ENCODE measurements at regions of chr7 and their contacts with region 1.

Region 1: DNA sequence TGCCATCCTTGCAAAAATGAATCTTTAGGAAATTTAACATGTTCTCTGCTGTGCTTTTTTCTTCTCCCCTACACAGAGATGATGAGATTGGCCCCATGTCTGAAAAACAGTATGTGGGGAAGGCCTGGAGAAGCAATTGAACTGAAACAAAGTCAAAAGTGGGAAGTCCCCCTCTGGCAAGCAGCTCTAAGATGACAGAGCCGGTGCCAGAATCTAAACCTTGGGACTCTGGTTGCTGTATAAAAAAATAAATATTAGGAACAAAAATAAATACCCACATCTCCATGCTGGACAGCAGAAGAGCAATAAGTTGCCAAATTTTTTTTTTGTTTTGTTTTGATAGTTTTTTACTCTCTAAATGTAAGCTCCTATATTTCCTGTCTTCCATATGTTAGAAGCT is 51.8 kb upstream of the TRIL start:
- DNase-seq: no peak
- H3K4me3 ChIP-seq: no peak overlapping the region
- CTCF ChIP-seq: no peak
- POLR2A ChIP-seq: no peak

Region 2: DNA sequence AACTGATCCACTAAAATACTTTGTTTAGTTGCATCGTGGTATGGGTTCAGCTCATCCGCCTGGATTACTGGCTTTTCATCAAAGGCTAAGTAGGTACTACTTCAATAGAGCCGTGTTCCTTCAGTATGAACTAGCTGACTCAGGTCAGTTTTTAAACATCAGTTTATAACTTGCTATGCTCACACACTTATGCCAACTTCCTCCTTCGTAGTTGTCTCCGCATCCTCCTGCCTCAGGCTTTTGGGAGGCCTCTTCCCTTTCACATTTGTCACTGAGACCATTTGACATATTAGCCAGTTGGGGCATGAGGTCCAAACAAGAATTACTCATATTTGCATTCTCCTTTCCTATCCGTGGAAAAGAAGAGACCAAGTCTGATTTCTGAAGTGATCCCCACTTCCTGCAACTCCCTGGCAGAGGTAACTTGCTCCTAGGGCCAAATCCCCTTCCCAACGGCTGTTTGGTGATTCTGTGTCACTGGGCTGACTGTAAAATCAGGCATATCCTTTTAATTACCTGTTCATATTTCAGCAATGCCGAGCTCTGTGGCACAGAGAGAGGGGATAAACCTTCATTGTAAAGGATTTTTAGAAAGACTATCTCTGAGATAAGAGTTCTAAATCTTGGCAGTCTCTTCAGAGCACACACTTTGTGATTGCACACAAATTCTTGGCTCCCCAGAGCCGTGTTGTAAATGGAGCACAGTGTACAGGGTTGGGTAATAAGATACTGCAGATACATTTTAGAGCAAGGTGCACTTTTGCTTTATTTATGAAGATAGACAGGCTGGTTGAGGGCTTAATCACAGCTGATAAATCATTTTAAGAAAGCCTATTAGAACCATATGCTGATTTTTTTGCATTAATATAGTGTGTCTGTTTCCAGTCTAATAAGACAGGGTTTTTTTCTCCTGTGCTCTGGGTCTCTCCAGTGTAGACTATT is 489.6 kb before region 1 on chr7:
- intact Hi-C with region 1: no loop called
- DNase-seq: no peak
- H3K4me3 ChIP-seq: no peak overlapping the region
- CTCF ChIP-seq: no peak
- POLR2A ChIP-seq: no peak

Region 3: DNA sequence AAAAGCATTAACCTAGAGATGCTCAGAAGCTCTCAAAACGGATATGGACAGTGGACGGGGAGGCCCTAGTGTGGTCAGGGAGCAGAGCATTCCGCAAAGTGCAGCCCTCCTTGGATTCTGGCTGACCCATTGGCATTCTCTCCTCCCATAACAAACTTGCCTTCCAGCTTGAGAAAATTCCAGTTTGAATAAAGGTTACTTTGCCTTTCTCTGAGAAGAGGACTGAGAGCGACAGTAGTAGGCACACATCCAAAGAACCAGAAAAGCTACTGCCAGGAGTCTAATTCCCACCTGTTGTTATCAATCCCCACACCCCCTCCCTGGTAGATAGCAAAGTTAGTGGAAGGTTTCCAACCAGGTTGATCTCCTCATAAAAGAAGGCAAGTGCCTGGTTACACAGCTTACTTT is 32.9 kb after region 1 on chr7:
- intact Hi-C with region 1: loop called (anchors 1 kb)
- DNase-seq: no peak
- H3K4me3 ChIP-seq: no peak overlapping the region
- CTCF ChIP-seq: no peak
- POLR2A ChIP-seq: no peak

Region 4: DNA sequence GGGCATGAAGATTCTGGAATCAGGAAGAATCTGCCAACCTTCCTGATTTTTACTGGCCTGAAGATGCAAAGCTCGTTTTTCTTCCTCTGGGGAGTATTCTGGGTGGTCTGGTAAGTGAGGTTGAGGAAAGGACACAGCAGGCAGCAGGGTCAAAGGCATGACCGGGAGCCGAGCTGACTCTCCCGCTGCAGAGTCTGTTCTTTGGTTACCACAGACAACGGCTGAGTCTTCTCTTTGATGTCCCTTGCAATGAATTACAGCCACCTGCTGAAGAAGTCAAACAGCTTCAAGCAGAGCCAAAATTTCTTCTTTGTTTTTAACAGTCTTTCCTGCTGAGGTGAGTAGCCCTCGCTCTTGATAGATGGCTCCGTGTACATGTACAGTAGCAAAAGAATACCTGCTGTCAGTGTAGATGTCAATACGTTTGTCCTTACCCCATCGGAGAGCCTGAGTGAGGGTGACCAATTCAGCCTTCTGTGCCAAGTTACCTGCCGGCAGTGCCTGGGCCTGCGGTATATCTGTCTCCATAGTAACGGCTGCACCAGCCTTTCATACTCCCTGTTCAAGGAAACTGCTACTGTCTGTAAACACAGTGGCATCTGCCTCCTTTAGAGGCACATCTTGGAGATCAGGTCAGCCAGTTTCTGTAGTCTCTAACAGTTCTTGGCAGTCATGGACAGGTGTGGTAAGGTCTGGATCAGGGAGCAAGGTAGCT is 630.1 kb after region 1 on chr7:
- intact Hi-C with region 1: no loop called
- DNase-seq: no peak
- H3K4me3 ChIP-seq: no peak overlapping the region
- CTCF ChIP-seq: no peak
- POLR2A ChIP-seq: no peak